ENCODE measurements at regions of chr3 and their contacts with region 1.

Region 1: DNA sequence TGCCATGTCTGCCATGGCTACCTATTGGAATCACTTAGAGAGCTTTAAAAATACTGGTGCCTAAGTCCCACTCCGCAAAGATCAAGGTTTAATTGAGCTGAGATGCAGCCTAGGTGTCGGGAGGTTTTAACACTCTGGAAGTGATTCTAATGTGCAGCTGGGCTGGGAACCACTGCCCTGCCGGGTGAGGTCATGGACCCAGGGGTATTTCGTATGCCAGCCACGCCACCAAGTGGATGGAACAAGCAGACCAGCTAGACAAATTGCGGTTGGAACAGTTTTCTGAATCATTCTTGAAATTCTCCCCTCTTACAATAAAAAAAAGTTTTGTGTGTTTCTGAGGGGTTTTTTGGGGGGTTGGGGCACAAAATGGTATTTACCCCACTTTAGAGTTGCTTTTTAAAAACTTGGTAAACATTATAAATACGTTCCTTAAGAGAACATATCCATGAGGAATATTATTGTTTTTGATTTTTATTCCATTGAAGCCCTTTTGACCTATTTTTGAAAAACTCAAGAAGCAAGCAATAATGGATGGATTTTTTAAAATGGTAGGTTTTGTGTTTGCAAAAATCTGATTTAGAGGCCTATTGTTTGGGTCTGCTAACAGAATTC is 66.2 kb upstream of the CSTA start:
- DNase-seq: peak; percentile 74
- H3K4me3 Mint-ChIP-seq: no peak overlapping the region
- H3K27ac Mint-ChIP-seq: no peak overlapping the region
- H3K4me1 Mint-ChIP-seq: no peaks in the 10 kb centered on the region
- H3K27me3 Mint-ChIP-seq: no peaks in the 10 kb centered on the region
- CTCF ChIP-seq: peak; percentile 72

Region 2: DNA sequence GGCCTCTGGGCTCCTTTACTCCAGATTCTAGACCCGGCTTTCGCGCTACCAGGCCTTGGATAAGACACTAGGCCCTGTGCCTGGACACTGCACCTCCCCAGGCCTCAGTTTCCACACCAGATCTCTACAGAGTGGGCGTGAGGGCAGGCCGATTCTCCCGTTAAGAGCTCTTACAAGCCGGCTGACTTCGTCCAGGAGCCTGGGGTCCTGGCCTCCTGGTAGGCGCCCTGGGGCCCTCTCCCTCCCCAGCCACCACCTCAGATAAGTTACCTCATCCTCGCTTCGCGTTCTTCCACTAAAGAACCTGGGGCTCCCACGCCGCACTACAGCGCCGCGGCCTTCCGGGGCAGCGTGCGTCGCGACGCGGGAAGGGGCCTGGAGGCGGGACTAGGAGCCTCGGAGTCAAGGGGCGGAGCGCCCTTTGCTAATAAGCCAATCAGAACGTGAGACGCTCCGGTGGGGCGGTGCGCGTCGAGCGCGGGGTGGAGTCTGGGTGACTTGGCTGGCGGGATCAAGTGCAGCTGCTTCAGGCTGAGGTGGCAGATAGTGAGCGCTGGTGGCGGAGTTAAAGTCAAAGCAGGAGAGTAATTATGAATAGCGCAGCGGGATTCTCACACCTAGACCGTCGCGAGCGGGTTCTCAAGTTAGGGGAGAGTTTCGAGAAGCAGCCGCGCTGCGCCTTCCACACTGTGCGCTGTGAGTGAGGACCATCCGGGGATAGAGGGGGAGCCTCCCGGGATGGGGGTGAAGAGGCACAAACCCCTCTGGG is 424.0 kb before region 1 on chr3 and contains the starts of genes EAF2 and IQCB1:
- CTCF ChIA-PET with region 1: no interaction called
- POLR2A ChIA-PET with region 1: interaction called, 3 read pairs
- intact Hi-C with region 1: loop called (anchors 10 kb)
- DNase-seq: peak; percentile 96
- H3K4me3 Mint-ChIP-seq: peak within 1 kb of the TSS; percentile 89
- H3K27ac Mint-ChIP-seq: peak within 1 kb of the TSS; percentile 84
- H3K4me1 Mint-ChIP-seq: peaks cover 12% of the 10 kb centered on the region
- H3K27me3 Mint-ChIP-seq: no peaks in the 10 kb centered on the region
- CTCF ChIP-seq: no peak
- total RNA-seq, gene EAF2: 2.5 and 2.7 TPM in 2 replicates
- total RNA-seq, gene IQCB1: 33.5 and 34.6 TPM in 2 replicates

Region 3: GRCh38 chr3:122107166-122107565 is 151.7 kb before region 1 on chr3:
- CTCF ChIA-PET with region 1: interaction called, 36 read pairs
- POLR2A ChIA-PET with region 1: no interaction called
- intact Hi-C with region 1: no loop called
- DNase-seq: no peak
- H3K4me3 Mint-ChIP-seq: no peak overlapping the region
- H3K27ac Mint-ChIP-seq: no peak overlapping the region
- H3K4me1 Mint-ChIP-seq: no peaks in the 10 kb centered on the region
- H3K27me3 Mint-ChIP-seq: no peaks in the 10 kb centered on the region
- CTCF ChIP-seq: no peak

Region 4: DNA sequence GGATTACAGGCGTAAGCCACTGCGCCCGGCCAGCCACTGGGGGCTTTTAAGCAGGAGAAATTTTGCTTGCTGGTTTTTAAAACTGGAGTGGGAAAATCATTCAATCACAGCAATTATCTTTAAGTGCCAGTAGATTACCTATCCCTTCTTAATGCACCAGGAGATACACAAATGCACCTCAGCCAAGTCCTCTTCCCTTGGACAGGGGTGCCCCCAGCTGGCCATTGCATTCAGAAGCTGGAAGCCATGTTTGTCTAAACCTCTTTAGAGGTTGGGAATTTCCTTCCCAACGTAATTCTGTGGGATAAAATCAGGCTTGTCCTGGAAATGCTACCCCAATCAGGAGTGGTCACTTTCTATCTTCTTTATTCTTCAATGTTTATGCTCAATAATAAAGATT is 97.6 kb after region 1 on chr3:
- CTCF ChIA-PET with region 1: interaction called, 5 read pairs
- POLR2A ChIA-PET with region 1: no interaction called
- intact Hi-C with region 1: loop called (anchors 2 kb)
- DNase-seq: peak; percentile 81
- H3K4me3 Mint-ChIP-seq: no peak overlapping the region
- H3K27ac Mint-ChIP-seq: no peak overlapping the region
- H3K4me1 Mint-ChIP-seq: peaks cover 26% of the 10 kb centered on the region
- H3K27me3 Mint-ChIP-seq: no peaks in the 10 kb centered on the region
- CTCF ChIP-seq: peak; percentile 50

Measured in MCF 10A (cell line).